CD8-positive, alpha-beta T cell (primary cell): ENCODE measurements at regions of chr5 and their contacts with region 1.

Region 1: GRCh38 chr5:18699681-18700080 is 1065.4 kb downstream of the TAF11L14 start:
- DNase-seq: no peak
- ATAC-seq: no peak
- H3K4me3 ChIP-seq: no peak overlapping the region
- H3K4me3 Mint-ChIP-seq: no peak overlapping the region
- H3K27ac ChIP-seq: no peak overlapping the region
- H3K27ac Mint-ChIP-seq: no peak overlapping the region
- H3K4me1 ChIP-seq: peaks cover 6% of the 10 kb centered on the region
- H3K4me1 Mint-ChIP-seq: peaks cover 9% of the 10 kb centered on the region
- H3K27me3 ChIP-seq: no peaks in the 10 kb centered on the region
- H3K27me3 Mint-ChIP-seq: no peaks in the 10 kb centered on the region
- CTCF ChIP-seq: no peak

Region 2: GRCh38 chr5:18393589-18394442 is 305.9 kb before region 1 on chr5:
- CTCF ChIA-PET with region 1: interaction called, 6 read pairs
- POLR2A ChIA-PET with region 1: no interaction called
- intact Hi-C with region 1: loop called in 1 of 2 experiments (anchors 5 kb)
- DNase-seq: peak in 7 of 9 experiments; percentile 1 to 21 (median 12)
- ATAC-seq: no peak
- H3K4me3 ChIP-seq: no peak overlapping the region
- H3K4me3 Mint-ChIP-seq: no peak overlapping the region
- H3K27ac ChIP-seq: no peak overlapping the region
- H3K27ac Mint-ChIP-seq: no peak overlapping the region
- H3K4me1 ChIP-seq: no peaks in the 10 kb centered on the region
- H3K4me1 Mint-ChIP-seq: no peaks in the 10 kb centered on the region
- H3K27me3 ChIP-seq: no peaks in the 10 kb centered on the region
- H3K27me3 Mint-ChIP-seq: no peaks in the 10 kb centered on the region
- CTCF ChIP-seq: peak; percentile 46

Region 3: GRCh38 chr5:18686253-18686652 is 13.4 kb before region 1 on chr5:
- CTCF ChIA-PET with region 1: no interaction called
- POLR2A ChIA-PET with region 1: no interaction called
- intact Hi-C with region 1: no loop called
- DNase-seq: no peak
- ATAC-seq: no peak
- H3K4me3 ChIP-seq: no peak overlapping the region
- H3K4me3 Mint-ChIP-seq: no peak overlapping the region
- H3K27ac ChIP-seq: no peak overlapping the region
- H3K27ac Mint-ChIP-seq: no peak overlapping the region
- H3K4me1 ChIP-seq: no peaks in the 10 kb centered on the region
- H3K4me1 Mint-ChIP-seq: no peaks in the 10 kb centered on the region
- H3K27me3 ChIP-seq: no peaks in the 10 kb centered on the region
- H3K27me3 Mint-ChIP-seq: no peaks in the 10 kb centered on the region
- CTCF ChIP-seq: no peak

Region 4: DNA sequence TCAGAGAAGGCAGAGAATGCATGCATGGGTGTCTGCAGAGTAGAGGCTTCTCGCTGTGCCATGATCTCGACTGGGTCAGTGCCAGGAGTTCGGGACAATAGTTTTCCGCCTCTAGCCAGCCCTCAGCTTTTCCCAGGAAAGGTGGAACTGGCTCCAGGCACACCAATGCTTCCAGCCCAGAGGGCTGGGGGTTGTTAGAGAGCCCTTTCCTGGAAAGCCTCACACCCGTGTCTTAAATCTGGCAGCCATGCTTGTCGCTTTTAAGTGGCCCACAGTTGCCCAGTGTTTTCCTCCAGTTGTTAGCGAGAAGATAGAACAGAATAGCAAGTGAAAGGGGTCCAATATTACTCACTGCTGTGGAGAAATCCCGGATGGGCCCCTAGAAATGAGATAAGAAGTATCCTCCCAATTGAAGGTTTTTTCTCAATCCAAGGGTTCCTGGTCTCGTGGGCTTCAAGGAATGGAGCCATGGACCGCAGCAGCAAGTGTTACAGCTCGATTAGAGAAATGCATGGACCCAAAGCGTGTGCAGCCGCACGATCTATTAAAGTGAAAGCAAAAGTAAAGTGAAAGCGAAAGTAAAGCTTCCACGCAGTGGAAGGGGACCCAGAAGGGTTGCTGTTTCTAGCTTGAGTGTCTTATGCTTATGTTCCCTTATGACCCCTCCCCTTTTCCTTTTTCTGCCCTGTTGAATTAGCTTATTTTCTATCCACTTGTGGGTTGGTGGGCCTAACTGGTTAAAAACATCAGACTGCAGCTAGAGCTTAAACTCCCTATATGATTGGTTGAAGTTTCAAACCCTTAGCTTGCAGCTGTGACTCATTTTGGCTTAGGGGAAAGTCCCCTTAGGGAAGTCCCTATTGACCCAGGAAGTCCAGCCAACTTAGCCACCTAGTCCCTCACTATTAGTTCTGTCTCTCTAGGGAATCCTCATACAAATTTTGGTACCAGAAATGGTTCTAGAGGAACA is 46.2 kb after region 1 on chr5:
- CTCF ChIA-PET with region 1: interaction called, 5 read pairs
- POLR2A ChIA-PET with region 1: no interaction called
- intact Hi-C with region 1: loop called in 1 of 2 experiments (anchors 1 kb)
- DNase-seq: peak in 8 of 9 experiments; percentile 11 to 87 (median 40)
- ATAC-seq: peak; percentile 85
- H3K4me3 ChIP-seq: peak overlapping the region; percentile 83 to 90
- H3K4me3 Mint-ChIP-seq: peak overlapping the region; percentile 94
- H3K27ac ChIP-seq: peak overlapping the region; percentile 75 to 89
- H3K27ac Mint-ChIP-seq: peak overlapping the region; percentile 96
- H3K4me1 ChIP-seq: peaks cover 35% of the 10 kb centered on the region
- H3K4me1 Mint-ChIP-seq: peaks cover 49% of the 10 kb centered on the region
- H3K27me3 ChIP-seq: no peaks in the 10 kb centered on the region
- H3K27me3 Mint-ChIP-seq: no peaks in the 10 kb centered on the region
- CTCF ChIP-seq: no peak